Posterior vena cava (tissue), 2 donors: ENCODE measurements at regions of chr21 and their contacts with region 1.

Region 1: GRCh38 chr21:45973659-45974072 is 7.9 kb upstream of the COL6A1 start:
- DNase-seq: peak; percentile 95

Region 2: GRCh38 chr21:46021978-46022544 is 48.4 kb after region 1 on chr21:
- intact Hi-C with region 1: no loop called
- DNase-seq: peak; percentile 92

Region 3: GRCh38 chr21:46097336-46098293 is 123.9 kb after region 1 on chr21 and contains the start of gene COL6A2:
- intact Hi-C with region 1: loop called (anchors 2 to 5 kb)
- DNase-seq: peak; percentile 87
- total RNA-seq, gene COL6A2: 1,504 to 1,642 TPM

Region 4: DNA sequence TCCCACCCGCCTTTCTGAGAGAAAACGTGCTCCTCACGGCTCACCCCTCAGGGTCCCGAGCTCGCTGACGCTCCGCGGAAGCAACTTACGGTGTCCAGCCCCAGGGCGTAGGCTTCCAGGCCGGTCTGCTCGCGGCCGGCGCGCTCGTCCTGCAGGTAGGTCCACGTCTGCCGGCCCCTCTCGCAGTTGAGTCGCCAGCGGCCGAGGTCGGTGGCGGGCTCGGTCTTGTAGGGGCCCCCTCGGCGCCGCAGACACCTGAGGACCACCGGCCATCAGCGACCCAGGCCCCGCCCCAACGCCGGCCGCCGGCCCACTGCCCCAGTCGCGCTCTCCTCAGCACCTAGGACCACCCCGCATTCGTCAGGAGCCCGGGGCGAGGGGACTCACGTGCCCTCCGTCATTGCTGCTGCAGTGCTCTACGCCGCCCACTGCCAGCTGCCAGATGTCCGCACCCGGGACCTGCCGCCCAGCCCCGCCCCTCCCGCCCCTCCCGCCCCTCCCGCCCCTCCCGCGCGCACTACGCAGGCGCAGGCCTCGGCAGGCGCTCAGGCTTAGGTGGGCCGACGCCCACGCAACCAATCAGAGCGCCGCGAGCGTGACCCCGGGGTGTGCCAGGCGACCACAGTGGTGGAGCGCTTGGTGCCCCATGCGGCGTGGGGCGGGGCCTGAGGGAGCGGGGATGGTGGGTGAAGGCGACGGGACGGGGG is 254.8 kb after region 1 on chr21 and contains the start of gene LSS:
- intact Hi-C with region 1: loop called in 1 of 2 experiments (anchors 5 kb)
- DNase-seq: peak; percentile 100
- total RNA-seq, gene LSS: 42.5 to 65.0 TPM